H1 (cell line): ENCODE measurements at regions of chr1 and their contacts with region 1.

Region 1: DNA sequence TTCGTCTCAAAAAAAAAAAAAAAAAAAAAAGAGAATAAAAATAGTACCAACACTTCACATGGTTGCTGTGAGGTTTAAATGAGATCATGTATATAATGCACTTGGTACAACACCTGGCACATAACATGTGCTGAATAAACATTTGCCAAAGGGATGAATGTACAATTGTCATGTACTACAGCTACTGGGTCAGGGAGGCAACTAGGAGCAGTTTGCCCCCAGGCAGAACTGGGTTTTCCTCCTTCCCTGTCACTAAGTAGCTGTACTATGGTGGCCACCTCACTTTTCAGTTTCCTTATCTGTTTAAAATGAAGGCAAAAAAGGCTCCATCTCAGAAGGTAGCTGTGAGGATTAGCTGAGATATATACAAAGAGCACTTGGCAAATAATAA is 11.5 kb downstream of the AK2 start:
- DNase-seq: no peak
- H3K4me3 ChIP-seq: no peak overlapping the region
- H3K27ac ChIP-seq: no peak overlapping the region
- H3K4me1 ChIP-seq: peaks cover 0 to 3% (median 0%) of the 10 kb centered on the region in 4 experiments; a peak in 4 of 7 replicates
- H3K27me3 ChIP-seq: no peaks in the 10 kb centered on the region
- CTCF ChIP-seq: no peak
- EP300 ChIP-seq: no peak
- POLR2A ChIP-seq: no peak
- RAD21 ChIP-seq: no peak

Region 2: GRCh38 chr1:33001282-33001681 is 23.9 kb before region 1 on chr1:
- CTCF ChIA-PET with region 1: interaction called, 11 read pairs
- POLR2A ChIA-PET with region 1: interaction called, 5 read pairs
- DNase-seq: no peak
- H3K4me3 ChIP-seq: no peak overlapping the region
- H3K27ac ChIP-seq: no peak overlapping the region
- H3K4me1 ChIP-seq: peaks cover 0 to 9% (median 5%) of the 10 kb centered on the region in 4 experiments; a peak in 4 of 7 replicates
- H3K27me3 ChIP-seq: no peaks in the 10 kb centered on the region
- CTCF ChIP-seq: peak in 2 of 3 experiments; percentile 49 to 60; a peak in 3 of 4 replicates
- EP300 ChIP-seq: no peak
- POLR2A ChIP-seq: no peak
- RAD21 ChIP-seq: peak; percentile 24 to 49; a peak in 3 of 4 replicates

Region 3: GRCh38 chr1:33014464-33015163 is 10.6 kb before region 1 on chr1:
- CTCF ChIA-PET with region 1: interaction called, 12 read pairs
- POLR2A ChIA-PET with region 1: interaction called, 8 read pairs
- DNase-seq: no peak
- H3K4me3 ChIP-seq: no peak overlapping the region
- H3K27ac ChIP-seq: no peak overlapping the region
- H3K4me1 ChIP-seq: no peaks in the 10 kb centered on the region
- H3K27me3 ChIP-seq: no peaks in the 10 kb centered on the region
- CTCF ChIP-seq: no peak
- EP300 ChIP-seq: no peak
- POLR2A ChIP-seq: no peak
- RAD21 ChIP-seq: peak in 1 of 2 experiments; percentile 24; a peak in 1 of 4 replicates

Region 4: GRCh38 chr1:33036041-33036525 is 10.9 kb after region 1 on chr1:
- CTCF ChIA-PET with region 1: interaction called, 12 read pairs
- POLR2A ChIA-PET with region 1: interaction called, 12 read pairs
- DNase-seq: no peak
- H3K4me3 ChIP-seq: peak overlapping the region; percentile 65 to 88 (median 74)
- H3K27ac ChIP-seq: no peak overlapping the region
- H3K4me1 ChIP-seq: peaks cover 0 to 8% (median 2%) of the 10 kb centered on the region in 4 experiments; a peak in 3 of 7 replicates
- H3K27me3 ChIP-seq: peaks cover 0 to 2% (median 0%) of the 10 kb centered on the region in 4 experiments; a peak in 2 of 7 replicates
- CTCF ChIP-seq: no peak
- EP300 ChIP-seq: no peak
- POLR2A ChIP-seq: no peak
- RAD21 ChIP-seq: no peak